ENCODE measurements at regions of chr15 and their contacts with region 1.

Region 1: GRCh38 chr15:75842722-75843551 is at the start of gene UBE2Q2:
- DNase-seq: peak; percentile 85
- CTCF ChIP-seq: no peak

Region 2: GRCh38 chr15:75785771-75786574 is 57.0 kb before region 1 on chr15:
- CTCF ChIA-PET with region 1: no interaction called
- POLR2A ChIA-PET with region 1: no interaction called
- DNase-seq: no peak
- CTCF ChIP-seq: no peak

Region 3: DNA sequence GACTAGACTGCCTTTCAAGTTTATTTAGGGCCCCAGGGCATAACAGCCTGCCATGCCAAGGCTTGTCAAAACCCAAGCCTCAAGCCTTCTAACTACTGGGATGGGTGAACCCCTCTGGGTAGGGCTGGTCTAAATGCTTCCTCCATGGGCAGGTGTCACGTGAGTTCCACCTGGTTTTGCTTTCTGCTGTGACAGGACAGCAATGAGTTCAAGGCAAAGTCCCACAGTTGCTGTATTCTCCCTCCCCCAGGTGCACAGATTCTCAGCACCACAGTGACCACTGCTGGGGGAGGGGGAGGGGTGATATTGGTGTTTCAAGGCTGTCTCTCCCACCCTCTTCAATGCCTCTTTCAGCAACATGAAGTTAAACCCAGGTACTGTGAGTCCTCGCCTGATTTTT is 46.6 kb before region 1 on chr15:
- CTCF ChIA-PET with region 1: no interaction called
- POLR2A ChIA-PET with region 1: no interaction called
- DNase-seq: no peak
- CTCF ChIP-seq: no peak

Region 4: DNA sequence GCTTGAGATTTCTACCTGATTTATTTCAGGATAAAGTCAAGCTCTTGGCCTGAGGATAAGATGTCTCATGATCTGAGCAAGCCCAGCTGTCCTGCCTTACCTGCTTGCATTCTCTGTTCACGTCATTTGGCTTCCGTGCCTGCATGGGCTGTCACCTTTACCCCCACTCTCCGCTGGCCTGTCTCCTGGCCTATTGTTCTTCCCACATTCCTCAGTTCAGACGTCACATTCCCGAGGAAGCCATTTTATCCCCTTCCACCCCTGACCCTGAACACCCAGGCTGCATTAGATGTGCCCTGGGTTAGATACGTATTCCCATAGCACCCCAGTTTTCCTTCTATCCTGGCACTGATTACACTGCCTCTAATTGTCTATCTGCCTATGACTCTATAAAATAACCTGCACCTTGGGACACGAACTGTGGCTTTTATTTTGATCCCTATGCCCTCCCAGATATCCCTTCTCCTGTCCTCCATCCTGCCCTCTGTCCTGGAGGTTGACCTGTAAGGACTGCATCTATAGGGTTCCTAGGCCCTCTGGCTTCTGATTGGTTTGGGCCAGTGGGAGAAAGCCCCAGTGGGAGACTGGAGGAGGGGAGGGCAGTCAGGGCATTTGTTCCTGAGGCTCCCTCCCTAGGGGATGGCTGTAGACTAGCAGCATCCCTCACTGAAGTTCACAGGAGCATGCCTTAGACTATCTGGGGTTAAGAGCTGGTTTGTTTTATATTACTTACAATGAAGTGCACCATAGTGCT is 18.9 kb before region 1 on chr15:
- CTCF ChIA-PET with region 1: interaction called, 13 read pairs
- POLR2A ChIA-PET with region 1: interaction called, 3 read pairs
- DNase-seq: no peak
- CTCF ChIP-seq: no peak

Region 5: DNA sequence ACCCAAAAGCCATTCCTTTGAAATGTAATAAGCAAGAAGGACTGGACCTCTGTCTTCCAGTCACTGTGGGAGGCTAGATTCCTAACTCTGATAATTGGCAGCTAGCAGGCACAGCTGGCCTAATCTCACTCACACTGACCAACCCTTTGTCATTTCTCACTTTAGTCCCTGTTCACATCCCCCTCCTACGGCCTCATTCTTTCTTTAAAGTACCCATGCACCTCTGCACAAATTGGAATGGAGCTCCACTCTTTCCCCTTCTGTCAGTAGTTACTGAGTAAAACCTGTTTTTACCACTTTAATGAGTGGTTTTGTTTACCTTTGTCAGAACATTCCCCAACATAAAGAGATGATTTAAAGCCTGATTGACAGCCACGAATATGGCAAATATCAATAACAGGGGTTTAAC is 11.4 kb before region 1 on chr15:
- CTCF ChIA-PET with region 1: interaction called, 14 read pairs
- POLR2A ChIA-PET with region 1: no interaction called
- DNase-seq: no peak
- CTCF ChIP-seq: no peak